ENCODE measurements at regions of chr18 and their contacts with region 1.

Region 1: DNA sequence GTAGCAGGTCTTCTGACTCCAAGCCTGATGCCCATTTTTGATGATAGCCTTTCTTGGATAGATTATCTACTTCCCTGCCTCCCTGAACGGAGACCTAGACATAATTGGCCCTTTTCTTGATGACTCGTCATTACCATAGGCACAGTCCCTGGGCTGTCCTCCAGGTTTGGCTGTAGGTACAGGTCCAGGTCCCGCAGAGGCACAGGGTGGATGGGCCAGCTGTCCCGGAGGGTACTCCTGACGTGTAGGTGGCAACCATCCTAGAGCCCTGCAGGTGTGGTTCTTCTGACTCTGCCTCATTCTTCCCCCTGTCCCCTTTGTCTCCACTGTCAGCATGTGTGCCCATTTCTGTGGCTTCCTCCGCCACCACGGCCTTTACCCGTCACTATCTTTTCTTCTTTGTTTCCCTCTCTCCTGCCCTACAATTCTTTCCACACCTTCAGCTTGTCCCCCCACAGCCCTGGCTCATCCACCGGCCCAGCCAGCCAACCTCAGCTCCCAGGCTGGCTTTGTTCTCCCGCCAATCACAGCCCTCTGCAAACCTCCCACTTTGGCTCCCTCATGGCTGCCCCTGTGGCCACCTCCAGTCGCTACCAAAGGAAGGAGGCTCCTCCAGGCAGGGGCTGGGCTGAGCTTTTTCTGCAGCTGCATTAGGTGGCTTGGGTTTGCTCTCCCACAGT is 102.8 kb downstream of the SMAD7 start:
- DNase-seq: peak; percentile 54

Region 2: DNA sequence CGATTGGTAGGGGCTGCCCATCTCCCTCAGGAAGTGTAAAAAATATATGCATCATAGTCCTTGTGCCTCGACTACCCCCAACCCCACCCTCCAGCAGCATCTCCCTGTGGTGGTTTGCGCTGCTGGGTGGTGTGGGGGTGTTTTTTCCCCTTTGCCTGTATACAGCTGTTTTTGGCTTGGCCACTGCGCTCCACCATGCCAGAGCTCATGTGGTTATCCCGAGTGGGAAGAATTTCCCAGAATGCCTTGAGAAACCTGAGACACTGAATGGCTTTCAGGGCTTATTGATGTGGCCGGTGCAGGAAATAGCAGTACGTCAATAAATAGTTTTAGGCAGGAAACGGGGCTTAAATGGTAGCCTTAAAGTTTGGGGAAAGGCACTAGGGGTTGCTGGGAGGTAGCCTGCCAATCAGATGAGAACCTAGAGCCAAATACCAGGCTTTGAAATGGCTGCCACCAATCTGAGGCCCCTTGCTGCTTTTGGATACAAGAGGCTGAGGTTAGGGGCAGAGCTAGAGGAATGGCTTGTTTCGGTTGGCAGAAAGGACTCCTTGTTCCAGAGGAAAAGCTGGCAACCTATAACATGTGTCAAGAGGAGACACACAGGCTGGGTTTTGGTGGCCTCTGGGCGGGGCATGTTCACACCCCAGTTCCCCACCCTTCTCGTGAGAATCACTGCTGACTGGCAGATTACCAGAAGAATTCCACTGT is 41.2 kb before region 1 on chr18:
- intact Hi-C with region 1: loop called in 1 of 2 experiments (anchors 1 kb)
- DNase-seq: no peak

Region 3: DNA sequence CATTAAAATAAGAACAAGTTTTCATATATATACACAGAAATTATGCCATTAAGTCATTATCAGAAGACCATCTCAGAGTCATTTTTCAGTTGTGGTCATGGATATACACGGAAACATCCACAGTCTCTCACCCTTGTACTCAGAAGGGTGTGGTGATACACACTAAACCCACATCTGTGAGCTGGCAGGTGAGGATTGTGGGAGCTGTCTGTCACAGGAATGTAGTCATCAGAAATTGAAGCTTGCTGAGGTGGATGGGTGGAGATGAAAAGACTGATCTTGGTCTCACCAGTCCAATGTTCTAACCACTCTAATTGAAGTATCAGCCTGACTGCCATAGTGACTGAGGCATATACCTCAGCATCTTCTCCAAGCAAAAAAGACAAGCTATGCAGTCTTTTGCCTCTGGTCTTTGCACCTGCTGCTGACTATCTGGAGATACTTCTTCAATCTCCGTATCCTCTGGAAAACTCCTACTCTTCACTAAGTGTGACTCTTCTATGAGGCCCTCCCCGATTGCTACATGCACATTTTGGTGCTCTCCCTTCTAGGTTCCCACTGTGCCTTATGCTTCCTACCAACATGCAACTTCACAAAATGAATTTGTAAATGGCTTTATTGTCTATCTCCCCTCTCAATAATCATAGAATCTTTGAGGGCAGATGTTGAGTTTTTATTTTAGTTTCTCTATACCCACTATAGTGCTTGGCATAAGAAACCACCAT is 379.7 kb after region 1 on chr18:
- intact Hi-C with region 1: no loop called
- DNase-seq: no peak

Region 4: DNA sequence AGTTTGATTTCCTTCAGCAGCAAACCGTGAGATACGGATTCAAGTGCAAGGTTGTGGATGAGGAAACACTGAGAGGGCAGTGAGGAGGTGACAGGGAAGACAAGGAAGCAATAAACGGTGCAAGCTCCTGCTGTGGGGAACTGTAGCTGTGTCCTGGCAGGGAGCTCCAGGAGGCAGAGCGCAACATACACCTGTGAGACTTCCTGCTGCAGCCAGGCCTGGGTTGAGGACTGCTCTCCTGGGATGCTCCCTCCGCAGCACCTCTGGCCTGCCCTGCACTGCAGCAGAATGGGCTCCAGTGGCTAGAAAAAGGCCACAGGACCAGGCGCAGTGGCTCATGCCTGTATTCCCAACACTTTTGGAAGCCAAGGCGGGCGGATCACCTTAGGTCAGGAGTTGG is 1886.4 kb after region 1 on chr18:
- intact Hi-C with region 1: no loop called
- DNase-seq: no peak